ENCODE measurements at regions of chr3 and their contacts with region 1.

Region 1: DNA sequence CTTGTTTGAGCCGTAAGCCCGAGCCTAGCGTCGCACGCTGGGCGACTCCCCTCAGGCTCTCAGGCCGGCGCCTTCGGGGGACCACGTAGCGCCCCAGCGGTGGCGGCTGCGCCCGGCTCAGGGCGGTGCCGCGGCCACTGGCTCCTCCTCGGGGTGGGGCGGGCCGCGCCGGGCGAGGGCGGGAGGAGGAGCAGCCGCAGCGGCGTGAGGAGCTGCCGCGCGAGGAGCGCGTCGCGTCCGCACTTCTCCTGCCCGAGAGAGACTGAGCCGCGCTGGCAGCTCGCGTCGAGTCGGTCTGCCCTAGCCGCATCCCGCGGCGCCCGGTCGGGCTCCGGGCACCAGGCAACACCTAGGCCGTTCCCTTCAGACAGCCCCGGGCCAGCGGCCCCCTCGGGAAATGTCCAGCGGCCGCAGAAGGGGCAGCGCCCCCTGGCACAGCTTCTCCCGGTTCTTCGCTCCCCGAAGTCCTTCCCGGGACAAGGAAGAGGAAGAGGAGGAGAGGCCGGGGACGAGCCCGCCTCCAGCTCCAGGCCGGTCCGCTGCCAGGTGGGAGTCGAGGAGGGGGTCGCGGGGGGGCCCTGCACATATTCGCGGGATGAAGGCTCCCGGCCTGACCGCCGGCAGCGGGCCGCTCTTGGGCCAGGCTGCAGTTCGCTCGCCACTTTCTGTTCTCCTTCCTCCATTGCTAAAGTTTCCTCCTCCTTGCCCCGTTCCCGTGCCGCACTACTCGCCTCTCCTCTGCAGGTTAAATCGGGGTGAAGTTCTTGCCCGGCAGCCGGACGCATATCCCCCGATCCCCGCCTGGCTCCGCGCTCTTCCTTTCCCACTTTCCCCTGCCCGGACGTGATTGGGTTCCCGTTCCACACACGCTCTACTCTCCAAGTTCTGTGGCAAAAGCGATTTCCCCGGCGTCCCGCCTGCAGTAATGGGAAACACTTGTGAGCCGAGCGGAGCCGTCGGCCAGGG is at the start of gene CRYBG3:
- DNase-seq: peak; percentile 78 to 86 (median 82)
- H3K4me3 ChIP-seq: peak within 1 kb of the TSS; percentile 61 to 87 (median 71)
- H3K27ac ChIP-seq: peak within 1 kb of the TSS; percentile 31 to 95 (median 90)
- H3K4me1 ChIP-seq: peaks cover 0 to 18% of the 10 kb centered on the region in 2 donors
- H3K27me3 ChIP-seq: no peaks in the 10 kb centered on the region
- CTCF ChIP-seq: peak in 2 of 6 experiments; percentile 1 to 12
- POLR2A ChIP-seq: peak; percentile 46 to 88
- total RNA-seq, gene CRYBG3: 6.0 to 25.0 (median 13.6) TPM

Region 2: DNA sequence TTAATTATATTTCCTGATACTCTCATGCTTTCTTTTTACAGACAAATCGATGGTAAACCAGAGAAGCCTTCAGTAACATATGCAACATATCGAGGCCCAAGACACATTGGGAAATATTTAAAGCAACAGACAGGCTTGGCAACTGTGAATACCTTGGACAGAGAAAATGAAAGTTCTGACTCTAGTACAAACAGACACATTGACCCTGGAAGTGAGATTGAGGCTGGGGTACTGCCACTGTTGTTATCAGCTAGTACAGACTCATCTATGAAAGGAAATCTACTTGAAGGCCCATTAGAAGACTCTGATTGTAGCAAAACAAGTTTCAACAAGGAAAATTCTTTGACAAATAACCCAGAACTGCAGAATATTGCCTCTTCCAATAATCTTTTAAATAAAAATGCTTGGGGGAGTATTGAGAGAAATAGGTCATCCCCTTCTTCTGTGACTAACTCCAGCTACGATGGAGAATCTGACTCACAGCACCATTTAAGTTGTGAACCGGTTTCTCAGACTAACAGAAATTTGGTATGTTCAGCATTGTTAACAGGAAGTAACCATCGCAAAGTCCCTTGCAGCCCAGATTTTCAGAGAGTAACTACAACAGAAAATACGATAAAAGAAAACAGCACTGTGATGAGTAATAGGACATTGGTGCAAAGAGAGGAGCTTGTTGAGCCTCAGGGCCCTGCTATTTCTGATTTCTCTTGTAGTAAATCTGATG is 49.9 kb after region 1 on chr3:
- intact Hi-C with region 1: loop called in 1 of 2 experiments (anchors 10 kb)
- DNase-seq: peak; percentile 21 to 68 (median 41)
- H3K4me3 ChIP-seq: peak overlapping the region in 1 of 4 donors; percentile 42
- H3K27ac ChIP-seq: peak overlapping the region; percentile 4 to 77 (median 72)
- H3K4me1 ChIP-seq: peaks cover 5 to 25% of the 10 kb centered on the region in 2 donors
- H3K27me3 ChIP-seq: no peaks in the 10 kb centered on the region
- CTCF ChIP-seq: no peak
- POLR2A ChIP-seq: peak in 1 of 2 donors; percentile 8

Region 3: GRCh38 chr3:97971677-97972567 is 149.8 kb after region 1 on chr3 and contains the start of gene RIOX2:
- intact Hi-C with region 1: loop called in 1 of 2 experiments (anchors 10 kb)
- DNase-seq: peak; percentile 71 to 86 (median 79)
- H3K4me3 ChIP-seq: peak within 1 kb of the TSS in 3 of 4 donors; percentile 41 to 92 (median 69)
- H3K27ac ChIP-seq: peak within 1 kb of the TSS; percentile 26 to 93 (median 70)
- H3K4me1 ChIP-seq: peaks cover 6 to 24% of the 10 kb centered on the region in 2 donors
- H3K27me3 ChIP-seq: no peaks in the 10 kb centered on the region
- CTCF ChIP-seq: no peak
- POLR2A ChIP-seq: peak in 1 of 2 donors; percentile 70
- total RNA-seq, gene RIOX2: 8.4 to 31.2 (median 19.7) TPM